ENCODE measurements at regions of chr4 and their contacts with region 1.

Region 1: GRCh38 chr4:68581383-68582338 is 5.5 kb upstream of the UGT2B17 start:
- DNase-seq: no peak
- ATAC-seq: no peak
- H3K4me3 ChIP-seq: no peak overlapping the region
- H3K27ac ChIP-seq: no peak overlapping the region
- H3K4me1 ChIP-seq: no peaks in the 10 kb centered on the region
- H3K27me3 ChIP-seq: no peaks in the 10 kb centered on the region
- CTCF ChIP-seq: no peak

Region 2: DNA sequence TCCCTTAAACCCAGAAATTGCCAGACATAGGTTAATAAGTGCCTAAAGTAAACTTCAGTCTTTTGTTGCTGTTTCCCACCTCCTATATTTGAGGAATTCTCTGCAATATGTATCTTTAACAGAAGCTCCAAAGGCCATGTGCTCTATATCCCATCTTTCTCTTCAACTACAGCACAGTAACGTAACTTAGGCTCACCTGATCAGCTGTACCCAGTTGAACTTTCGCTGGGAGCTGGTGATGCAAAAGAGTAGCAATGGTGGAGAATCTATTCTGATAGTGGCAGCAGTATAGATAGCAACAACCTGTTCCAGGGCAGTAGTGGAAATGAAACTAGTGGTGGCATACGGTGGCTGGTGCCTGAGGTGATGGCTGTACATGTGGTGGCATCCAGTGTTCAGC is 198.5 kb before region 1 on chr4:
- intact Hi-C with region 1: no loop called
- DNase-seq: no peak
- ATAC-seq: no peak
- H3K4me3 ChIP-seq: no peak overlapping the region
- H3K27ac ChIP-seq: no peak overlapping the region
- H3K4me1 ChIP-seq: no peaks in the 10 kb centered on the region
- H3K27me3 ChIP-seq: peaks cover 0 to 64% (median 34%) of the 10 kb centered on the region in 7 donors
- CTCF ChIP-seq: no peak

Region 3: DNA sequence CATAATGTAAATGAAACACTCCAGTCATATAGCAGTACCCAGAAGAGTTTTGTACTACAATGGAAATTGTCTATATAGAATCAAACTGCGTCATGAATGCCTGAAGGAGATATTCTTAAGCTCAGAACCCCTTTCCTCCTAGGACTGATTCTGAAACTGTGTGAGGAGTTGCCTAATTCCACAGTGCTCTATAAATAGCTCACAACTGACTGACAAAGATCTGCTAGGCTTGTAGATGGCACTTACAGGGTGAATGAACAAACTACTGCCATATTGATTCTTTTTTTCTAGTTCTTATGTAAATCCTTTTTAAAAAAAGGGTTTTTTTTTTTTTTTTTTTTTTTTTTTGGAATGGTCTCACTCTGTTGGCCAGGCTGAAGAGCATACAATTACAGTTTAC is 24.6 kb after region 1 on chr4:
- intact Hi-C with region 1: loop called in 1 of 10 experiments (anchors 2 kb)
- DNase-seq: no peak
- ATAC-seq: no peak
- H3K4me3 ChIP-seq: no peak overlapping the region
- H3K27ac ChIP-seq: no peak overlapping the region
- H3K4me1 ChIP-seq: no peaks in the 10 kb centered on the region
- H3K27me3 ChIP-seq: no peaks in the 10 kb centered on the region
- CTCF ChIP-seq: no peak

Measured in heart right ventricle (tissue), 16 donors.